GM12878 (cell line): ENCODE measurements at regions of chr6 and their contacts with region 1.

Region 1: DNA sequence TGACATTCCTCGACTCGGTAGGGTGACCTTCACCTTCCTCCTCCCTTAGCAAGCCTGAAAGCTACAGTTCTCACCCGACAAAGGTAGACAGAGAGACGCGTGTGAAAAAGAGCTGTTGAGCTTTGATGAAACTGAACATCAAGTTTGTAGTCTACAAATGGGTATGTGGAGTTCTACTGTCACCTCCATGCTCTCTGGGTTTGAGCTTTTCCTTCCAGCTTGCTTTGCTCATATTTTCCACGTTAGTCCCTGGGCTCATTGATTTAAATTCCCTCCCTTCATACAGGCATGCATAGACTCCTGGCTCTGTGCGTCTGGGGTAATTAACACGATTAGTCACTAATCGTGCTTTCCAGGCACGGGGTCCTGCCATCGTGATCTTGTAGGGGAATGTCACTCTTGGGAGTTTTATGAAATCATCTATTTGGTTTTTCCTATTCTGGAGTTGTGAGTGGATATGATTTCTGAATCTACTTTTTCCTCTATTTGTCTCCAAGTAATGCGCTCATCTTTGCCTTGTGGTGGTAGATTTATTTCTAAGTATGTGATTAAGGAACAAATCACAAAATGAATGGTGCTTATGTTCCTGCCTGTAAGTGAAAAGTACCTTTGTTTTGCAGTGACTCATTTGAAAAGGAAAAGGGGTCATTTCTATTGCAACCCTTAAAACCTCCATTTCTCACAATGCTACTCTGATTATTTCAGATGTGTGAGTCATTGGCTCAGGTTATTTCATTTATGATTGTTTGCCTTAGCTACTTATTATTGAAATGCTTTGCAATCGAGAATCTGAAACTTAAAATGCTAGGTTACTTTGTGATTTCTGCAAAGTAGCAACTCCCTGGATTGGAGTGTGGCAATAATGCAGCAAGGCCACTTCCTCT is 154.6 kb downstream of the ZDHHC14 start:
- DNase-seq: peak; percentile 71
- ATAC-seq: peak; percentile 85
- H3K4me3 ChIP-seq: no peak overlapping the region
- H3K27ac ChIP-seq: no peak overlapping the region; the same call in 1 of the 2 replicates
- H3K4me1 ChIP-seq: peaks cover 8% of the 10 kb centered on the region; the same call in 1 of the 2 replicates
- H3K27me3 ChIP-seq: no peaks in the 10 kb centered on the region
- CTCF ChIP-seq: no peak
- EP300 ChIP-seq: peak; percentile 85 to 91; a peak in 3 of 4 replicates
- POLR2A ChIP-seq: no peak
- RAD21 ChIP-seq: no peak

Region 2: GRCh38 chr6:157571269-157571668 is 35.7 kb after region 1 on chr6:
- CTCF ChIA-PET with region 1: interaction called, 4 read pairs
- POLR2A ChIA-PET with region 1: no interaction called
- RAD21 ChIA-PET with region 1: interaction called, 17 read pairs
- SMC1A ChIA-PET with region 1: interaction called, 10 read pairs
- in situ Hi-C with region 1: no loop called
- intact Hi-C with region 1: no loop called
- DNase-seq: peak; percentile 68
- ATAC-seq: peak; percentile 69
- H3K4me3 ChIP-seq: no peak overlapping the region
- H3K27ac ChIP-seq: peak overlapping the region; percentile 60
- H3K4me1 ChIP-seq: peaks cover 22% of the 10 kb centered on the region
- H3K27me3 ChIP-seq: no peaks in the 10 kb centered on the region
- CTCF ChIP-seq: 0 out of 6 replicates have a peak, but pooled peaks of 1 of the 3 experiments have one; percentile 9
- EP300 ChIP-seq: peak; percentile 16 to 84; a peak in 1 of 4 replicates
- POLR2A ChIP-seq: no peak
- RAD21 ChIP-seq: no peak